H1 (cell line): ENCODE measurements at regions of chr3 and their contacts with region 1.

Region 1: DNA sequence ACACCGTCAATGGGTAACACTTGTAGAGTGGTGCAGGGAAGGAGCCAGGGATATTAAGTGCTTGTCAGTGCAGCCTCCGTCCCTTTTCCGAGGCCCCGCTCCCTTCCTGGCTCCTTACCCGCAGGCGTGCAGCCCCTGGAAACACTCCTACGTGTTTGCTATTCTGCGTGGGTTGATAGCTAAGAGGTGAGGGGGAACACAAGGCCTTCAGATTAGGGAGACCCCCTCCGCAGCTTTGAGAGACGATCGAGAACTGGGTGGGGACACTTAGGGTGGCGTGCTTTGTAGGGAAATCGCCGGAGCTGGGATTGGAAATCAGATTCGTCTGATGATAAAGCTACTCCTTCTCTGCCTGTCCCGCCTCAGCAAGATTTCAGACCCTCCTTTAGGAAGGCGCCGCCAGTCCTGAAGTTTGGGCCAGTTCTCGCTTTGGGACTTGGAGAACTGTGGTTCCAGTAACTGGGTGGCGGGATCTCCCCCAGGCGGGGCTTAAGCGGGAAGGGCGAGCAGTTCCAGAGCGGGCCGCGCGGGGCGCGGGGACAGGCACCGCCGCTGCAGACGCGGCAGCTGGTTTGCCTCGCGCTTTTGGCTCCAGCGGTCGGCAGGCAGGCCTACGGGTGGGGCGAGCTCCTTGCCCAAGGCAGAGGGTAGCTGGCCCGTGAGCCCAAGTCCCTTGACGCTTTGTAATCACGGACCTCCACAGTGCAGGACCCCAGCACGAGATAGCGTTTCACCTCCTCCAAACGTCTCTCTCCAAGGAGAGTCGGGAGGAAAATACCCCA is 8.0 kb upstream of the FAM107A start:
- DNase-seq: peak in 1 of 2 experiments; percentile 88
- H3K4me3 ChIP-seq: peak overlapping the region; percentile 5 to 47 (median 18); a peak in 6 of 8 replicates
- H3K27ac ChIP-seq: no peak overlapping the region
- H3K4me1 ChIP-seq: peaks cover 5 to 21% (median 12%) of the 10 kb centered on the region in 4 experiments; a peak in 6 of 7 replicates
- H3K27me3 ChIP-seq: peaks cover 7 to 35% (median 31%) of the 10 kb centered on the region in 4 experiments
- CTCF ChIP-seq: peak; percentile 68 to 82 (median 77)
- EP300 ChIP-seq: 0 out of 3 replicates have a peak, but pooled peaks of 1 of the 2 experiments have one; percentile 36
- POLR2A ChIP-seq: no peak
- RAD21 ChIP-seq: peak; percentile 38 to 57

Region 2: GRCh38 chr3:58623961-58624360 is 38.8 kb after region 1 on chr3:
- CTCF ChIA-PET with region 1: interaction called, 994 read pairs
- POLR2A ChIA-PET with region 1: interaction called, 4 read pairs
- DNase-seq: no peak
- H3K4me3 ChIP-seq: no peak overlapping the region
- H3K27ac ChIP-seq: no peak overlapping the region
- H3K4me1 ChIP-seq: no peaks in the 10 kb centered on the region
- H3K27me3 ChIP-seq: no peaks in the 10 kb centered on the region
- CTCF ChIP-seq: no peak
- EP300 ChIP-seq: no peak
- POLR2A ChIP-seq: no peak
- RAD21 ChIP-seq: no peak

Region 3: DNA sequence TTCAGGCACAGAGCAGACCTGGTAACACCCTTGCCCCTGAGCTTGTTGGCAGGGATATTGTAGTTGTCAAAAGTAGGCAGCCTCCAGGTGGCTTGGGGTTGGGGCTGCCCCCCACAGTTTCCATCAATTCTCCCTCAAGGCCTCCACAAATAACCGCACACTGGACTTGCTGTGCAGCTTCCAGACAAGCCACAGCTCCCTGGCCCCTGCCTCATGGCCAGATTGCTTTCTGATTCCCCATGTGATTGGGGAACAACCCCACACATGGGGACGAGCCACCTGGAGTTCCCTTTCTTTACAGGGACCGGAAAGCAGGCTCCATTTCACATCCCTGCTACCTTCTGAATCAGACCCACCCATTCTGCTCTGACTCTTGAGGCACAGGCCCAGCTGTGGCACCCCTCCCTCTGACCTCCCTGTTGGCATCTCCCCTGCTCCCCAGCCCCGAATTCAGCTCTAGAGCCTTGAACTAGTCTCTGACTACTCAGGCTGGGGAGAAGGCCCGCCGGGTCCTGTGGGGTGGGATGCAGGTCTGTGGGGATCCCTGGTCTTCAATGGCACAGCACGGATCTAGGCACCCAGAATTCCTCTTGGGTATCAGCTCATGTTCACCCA is 69.2 kb after region 1 on chr3:
- CTCF ChIA-PET with region 1: no interaction called
- POLR2A ChIA-PET with region 1: no interaction called
- DNase-seq: no peak
- H3K4me3 ChIP-seq: no peak overlapping the region
- H3K27ac ChIP-seq: no peak overlapping the region
- H3K4me1 ChIP-seq: no peaks in the 10 kb centered on the region
- H3K27me3 ChIP-seq: no peaks in the 10 kb centered on the region
- CTCF ChIP-seq: no peak
- EP300 ChIP-seq: no peak
- POLR2A ChIP-seq: no peak
- RAD21 ChIP-seq: no peak

Region 4: GRCh38 chr3:58792921-58793451 is 207.8 kb after region 1 on chr3:
- CTCF ChIA-PET with region 1: no interaction called
- POLR2A ChIA-PET with region 1: no interaction called
- DNase-seq: no peak
- H3K4me3 ChIP-seq: no peak overlapping the region
- H3K27ac ChIP-seq: no peak overlapping the region
- H3K4me1 ChIP-seq: peaks cover 0 to 3% (median 0%) of the 10 kb centered on the region in 4 experiments; a peak in 3 of 7 replicates
- H3K27me3 ChIP-seq: no peaks in the 10 kb centered on the region
- CTCF ChIP-seq: no peak
- EP300 ChIP-seq: no peak
- POLR2A ChIP-seq: no peak
- RAD21 ChIP-seq: no peak